Activated naive CD4-positive, alpha-beta T cell treated with anti-CD3 and anti-CD28 coated beads for 36 hours (primary cell): ENCODE measurements at regions of chr2 and their contacts with region 1.

Region 1: GRCh38 chr2:162318328-162319180 is at the start of gene IFIH1:
- DNase-seq: peak; percentile 88
- H3K4me3 Mint-ChIP-seq: peak within 1 kb of the TSS; percentile 94
- H3K27ac Mint-ChIP-seq: peak within 1 kb of the TSS; percentile 98
- H3K4me1 Mint-ChIP-seq: peaks cover 52% of the 10 kb centered on the region
- H3K27me3 Mint-ChIP-seq: no peaks in the 10 kb centered on the region
- total RNA-seq, gene IFIH1: 33.8 to 34.6 TPM

Region 2: DNA sequence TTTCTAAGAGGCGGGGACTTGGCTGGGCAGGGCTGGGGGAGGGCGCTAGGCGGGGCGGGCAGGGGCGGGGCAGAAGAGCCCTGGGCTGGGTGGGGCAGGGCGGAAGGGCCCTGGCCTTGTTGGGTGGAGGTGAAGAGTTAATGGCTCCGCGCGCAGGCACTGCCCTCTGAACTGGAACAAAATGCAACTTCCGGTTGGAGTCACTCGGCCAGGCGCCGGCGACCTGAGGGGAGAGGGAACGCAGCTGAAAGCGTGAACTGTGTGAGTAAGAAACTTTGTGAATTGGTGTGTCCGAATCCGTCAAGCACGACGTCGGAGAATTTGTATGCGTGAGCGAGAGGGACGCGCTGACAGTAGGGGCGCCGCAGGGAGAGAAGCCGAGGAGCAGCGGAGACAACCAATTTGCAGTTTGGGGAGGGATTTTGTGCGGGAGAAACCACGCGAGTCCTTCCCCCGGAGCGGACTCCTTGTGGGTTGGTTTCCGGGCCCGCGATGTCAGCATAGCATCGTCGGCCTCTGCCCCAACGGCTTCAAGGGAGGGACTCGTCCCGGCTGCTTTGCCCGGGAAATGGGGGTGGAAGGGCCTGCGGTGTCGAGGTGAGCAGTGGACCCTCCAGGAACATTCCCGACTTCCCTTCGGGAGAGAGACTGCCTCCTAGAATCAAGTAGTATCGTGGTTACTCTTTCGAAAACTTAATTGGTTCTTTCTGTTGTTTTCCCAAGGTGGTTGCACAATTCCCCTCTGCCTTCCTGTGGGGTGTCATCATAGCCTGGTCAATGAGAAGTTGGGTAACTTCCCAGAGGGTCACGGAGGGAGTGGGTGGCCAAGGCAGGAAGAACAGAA is 1158.1 kb before region 1 on chr2 and contains the start of gene TANK:
- CTCF ChIA-PET with region 1: no interaction called
- intact Hi-C with region 1: loop called (anchors 1 kb)
- DNase-seq: peak; percentile 94
- H3K4me3 Mint-ChIP-seq: peak within 1 kb of the TSS; percentile 96
- H3K27ac Mint-ChIP-seq: peak within 1 kb of the TSS; percentile 99
- H3K4me1 Mint-ChIP-seq: peaks cover 48% of the 10 kb centered on the region
- H3K27me3 Mint-ChIP-seq: no peaks in the 10 kb centered on the region
- total RNA-seq, gene TANK: 48.6 to 50.4 TPM

Region 3: GRCh38 chr2:161992526-161992925 is 326.0 kb before region 1 on chr2:
- CTCF ChIA-PET with region 1: no interaction called
- intact Hi-C with region 1: loop called (anchors 5 kb)
- DNase-seq: peak; percentile 80
- H3K4me3 Mint-ChIP-seq: peak overlapping the region; percentile 78
- H3K27ac Mint-ChIP-seq: peak overlapping the region; percentile 97
- H3K4me1 Mint-ChIP-seq: peaks cover 49% of the 10 kb centered on the region
- H3K27me3 Mint-ChIP-seq: no peaks in the 10 kb centered on the region

Region 4: GRCh38 chr2:162073888-162074645 is 244.5 kb before region 1 on chr2 and contains the start of gene DPP4:
- CTCF ChIA-PET with region 1: no interaction called
- intact Hi-C with region 1: loop called (anchors 5 kb)
- DNase-seq: peak; percentile 60
- H3K4me3 Mint-ChIP-seq: peak within 1 kb of the TSS; percentile 94
- H3K27ac Mint-ChIP-seq: peak within 1 kb of the TSS; percentile 79
- H3K4me1 Mint-ChIP-seq: peaks cover 48% of the 10 kb centered on the region
- H3K27me3 Mint-ChIP-seq: no peaks in the 10 kb centered on the region
- total RNA-seq, gene DPP4: 11.9 to 12.9 TPM

Region 5: GRCh38 chr2:162333968-162334367 is 15.4 kb after region 1 on chr2:
- CTCF ChIA-PET with region 1: interaction called, 11 read pairs
- intact Hi-C with region 1: no loop called
- DNase-seq: peak; percentile 53
- H3K4me3 Mint-ChIP-seq: no peak overlapping the region
- H3K27ac Mint-ChIP-seq: no peak overlapping the region
- H3K4me1 Mint-ChIP-seq: no peaks in the 10 kb centered on the region
- H3K27me3 Mint-ChIP-seq: no peaks in the 10 kb centered on the region

Region 6: DNA sequence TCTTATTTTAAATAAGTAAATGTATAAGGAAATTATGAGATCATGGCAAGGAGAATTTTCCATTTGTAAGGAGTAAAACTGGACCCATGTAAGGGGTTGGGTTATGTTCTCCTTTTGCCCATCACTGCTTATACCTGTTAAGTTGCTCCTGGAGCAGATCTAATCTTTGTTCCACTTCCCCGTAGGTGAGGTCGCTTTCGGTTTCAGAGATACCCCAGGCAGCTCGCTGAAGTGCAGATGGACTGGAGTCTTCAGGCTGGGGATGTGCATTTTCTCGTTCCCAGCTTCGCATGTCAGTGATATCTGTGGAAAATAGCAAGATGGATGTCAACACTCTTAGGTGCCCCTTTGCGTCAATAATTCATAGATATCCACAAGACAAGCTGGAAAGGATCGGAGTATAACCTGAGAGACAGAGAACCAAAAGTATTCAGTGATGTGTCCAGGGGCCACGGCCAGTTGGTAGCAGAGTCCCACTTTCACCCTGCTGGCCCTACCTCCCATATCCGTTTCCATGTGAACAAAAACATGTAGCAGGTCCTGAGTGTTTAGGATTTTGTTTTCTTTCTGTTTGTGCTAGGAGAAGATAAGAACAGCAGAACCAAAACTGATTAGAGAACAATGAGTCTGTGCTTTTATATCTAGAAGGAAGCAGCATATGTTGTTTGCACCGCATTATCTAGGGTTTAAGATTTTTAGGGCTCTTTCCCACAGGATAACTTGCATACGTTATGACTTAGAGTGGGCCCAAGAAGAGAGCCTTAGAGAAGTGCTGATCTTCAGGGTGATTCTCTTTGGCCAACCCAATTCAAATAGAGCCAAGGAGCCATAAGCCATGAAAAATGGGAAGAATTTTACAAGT is 61.4 kb after region 1 on chr2:
- CTCF ChIA-PET with region 1: no interaction called
- intact Hi-C with region 1: no loop called
- DNase-seq: no peak
- H3K4me3 Mint-ChIP-seq: no peak overlapping the region
- H3K27ac Mint-ChIP-seq: no peak overlapping the region
- H3K4me1 Mint-ChIP-seq: no peaks in the 10 kb centered on the region
- H3K27me3 Mint-ChIP-seq: peaks cover 14% of the 10 kb centered on the region